ENCODE measurements at regions of chr17 and their contacts with region 1.

Region 1: GRCh38 chr17:42459256-42459800 is 650 bp downstream of the ATP6V0A1 start:
- DNase-seq: peak in 2 of 9 experiments; percentile 25 to 38
- ATAC-seq: peak; percentile 15
- H3K4me3 ChIP-seq: peak overlapping the region; percentile 53 to 54
- H3K4me3 Mint-ChIP-seq: peak overlapping the region; percentile 89
- H3K27ac ChIP-seq: peak overlapping the region in 1 of 2 experiments; percentile 39
- H3K27ac Mint-ChIP-seq: peak overlapping the region; percentile 70
- H3K4me1 ChIP-seq: peaks cover 38% of the 10 kb centered on the region
- H3K4me1 Mint-ChIP-seq: peaks cover 41% of the 10 kb centered on the region
- H3K27me3 ChIP-seq: peaks cover 0 to 2% of the 10 kb centered on the region in 2 experiments
- H3K27me3 Mint-ChIP-seq: no peaks in the 10 kb centered on the region
- CTCF ChIP-seq: no peak

Region 2: DNA sequence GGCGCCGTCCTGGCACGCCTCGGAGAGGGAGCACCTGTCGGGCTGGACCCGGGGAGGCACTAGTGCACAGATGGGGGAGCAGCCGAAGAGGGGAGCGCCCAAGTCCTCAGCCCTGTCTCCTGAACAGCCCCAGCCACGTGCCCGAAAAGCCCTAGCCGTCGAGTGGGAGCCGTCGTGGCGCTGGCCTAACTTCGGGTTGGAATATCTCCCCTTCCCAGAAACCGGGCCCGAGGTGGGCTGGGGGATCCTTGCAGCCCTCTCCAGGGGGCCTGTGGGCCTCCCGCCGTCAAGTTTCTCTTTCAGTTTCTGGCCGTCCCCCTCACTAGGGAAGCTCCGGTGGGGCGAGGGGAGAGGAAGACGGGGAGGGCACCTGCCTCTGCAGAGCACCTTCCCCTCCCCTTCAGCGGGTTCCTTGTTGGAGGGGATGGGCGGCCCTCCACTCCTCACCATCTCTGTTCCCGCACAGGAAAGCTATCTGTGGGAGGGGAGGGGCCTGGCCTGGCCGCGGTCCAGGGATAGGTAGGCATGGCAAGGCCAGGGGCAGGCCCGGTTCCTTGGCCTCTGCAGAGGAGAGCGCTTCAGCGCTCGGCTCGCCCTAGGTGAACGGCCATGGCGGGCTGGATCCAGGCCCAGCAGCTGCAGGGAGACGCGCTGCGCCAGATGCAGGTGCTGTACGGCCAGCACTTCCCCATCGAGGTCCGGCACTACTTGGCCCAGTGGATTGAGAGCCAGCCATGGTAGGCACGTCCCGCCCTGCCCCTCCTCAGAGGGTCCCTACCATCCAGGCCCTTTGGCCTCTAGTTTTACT is 170.3 kb before region 1 on chr17:
- CTCF ChIA-PET with region 1: no interaction called
- POLR2A ChIA-PET with region 1: no interaction called
- intact Hi-C with region 1: no loop called
- DNase-seq: peak; percentile 24 to 82 (median 61)
- ATAC-seq: peak; percentile 43
- H3K4me3 ChIP-seq: peak overlapping the region; percentile 74 to 84
- H3K4me3 Mint-ChIP-seq: peak overlapping the region; percentile 94
- H3K27ac ChIP-seq: peak overlapping the region; percentile 87 to 94
- H3K27ac Mint-ChIP-seq: peak overlapping the region; percentile 93
- H3K4me1 ChIP-seq: peaks cover 35% of the 10 kb centered on the region
- H3K4me1 Mint-ChIP-seq: peaks cover 54% of the 10 kb centered on the region
- H3K27me3 ChIP-seq: no peaks in the 10 kb centered on the region
- H3K27me3 Mint-ChIP-seq: no peaks in the 10 kb centered on the region
- CTCF ChIP-seq: no peak

Region 3: GRCh38 chr17:42337442-42337841 is 121.9 kb before region 1 on chr17:
- CTCF ChIA-PET with region 1: no interaction called
- POLR2A ChIA-PET with region 1: no interaction called
- intact Hi-C with region 1: loop called in 1 of 2 experiments (anchors 1 kb)
- DNase-seq: peak; percentile 31 to 87 (median 67)
- ATAC-seq: peak; percentile 85
- H3K4me3 ChIP-seq: no peak overlapping the region
- H3K4me3 Mint-ChIP-seq: peak overlapping the region; percentile 57
- H3K27ac ChIP-seq: peak overlapping the region; percentile 41 to 54
- H3K27ac Mint-ChIP-seq: peak overlapping the region; percentile 92
- H3K4me1 ChIP-seq: peaks cover 31% of the 10 kb centered on the region
- H3K4me1 Mint-ChIP-seq: peaks cover 39% of the 10 kb centered on the region
- H3K27me3 ChIP-seq: no peaks in the 10 kb centered on the region
- H3K27me3 Mint-ChIP-seq: no peaks in the 10 kb centered on the region
- CTCF ChIP-seq: no peak

Region 4: DNA sequence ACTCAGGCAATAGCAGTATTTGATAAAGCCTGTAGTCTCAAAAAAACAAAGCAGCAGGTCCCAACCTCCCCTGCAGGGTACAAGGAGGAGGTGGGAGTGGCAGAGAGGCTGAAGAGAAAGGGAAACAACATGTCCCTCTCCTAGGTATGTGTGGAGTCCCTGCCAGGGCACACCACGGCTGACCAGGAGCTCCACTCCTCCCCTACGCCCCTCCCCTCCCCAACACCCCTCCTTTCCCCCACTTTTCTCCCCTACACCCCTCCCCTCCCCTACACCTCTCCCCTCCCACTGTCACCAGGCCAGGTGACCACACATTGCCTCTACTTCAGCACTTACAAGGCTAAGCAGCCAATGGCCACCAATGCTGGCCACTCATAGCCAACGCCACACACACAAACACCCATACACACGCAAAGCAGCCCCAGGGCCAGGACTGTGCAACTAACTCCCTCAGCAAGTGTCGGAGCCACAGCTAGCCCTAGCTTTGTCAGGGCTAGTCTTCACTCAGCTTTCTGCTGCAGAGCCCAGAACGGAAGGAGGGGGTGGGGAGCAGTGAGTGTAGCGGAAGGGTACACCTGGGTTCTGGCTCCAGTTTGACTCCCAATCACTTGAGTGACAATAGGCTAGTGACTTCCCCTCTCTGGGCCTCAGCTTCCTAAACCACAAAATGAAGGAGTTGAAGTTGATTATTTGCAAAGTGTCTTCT is 44.5 kb before region 1 on chr17:
- CTCF ChIA-PET with region 1: no interaction called
- POLR2A ChIA-PET with region 1: no interaction called
- intact Hi-C with region 1: no loop called
- DNase-seq: peak in 7 of 9 experiments; percentile 29 to 67 (median 45)
- ATAC-seq: peak; percentile 79
- H3K4me3 ChIP-seq: no peak overlapping the region
- H3K4me3 Mint-ChIP-seq: peak overlapping the region; percentile 33
- H3K27ac ChIP-seq: no peak overlapping the region
- H3K27ac Mint-ChIP-seq: peak overlapping the region; percentile 11
- H3K4me1 ChIP-seq: peaks cover 16% of the 10 kb centered on the region
- H3K4me1 Mint-ChIP-seq: peaks cover 12% of the 10 kb centered on the region
- H3K27me3 ChIP-seq: no peaks in the 10 kb centered on the region
- H3K27me3 Mint-ChIP-seq: peaks cover 2% of the 10 kb centered on the region
- CTCF ChIP-seq: no peak

Region 5: DNA sequence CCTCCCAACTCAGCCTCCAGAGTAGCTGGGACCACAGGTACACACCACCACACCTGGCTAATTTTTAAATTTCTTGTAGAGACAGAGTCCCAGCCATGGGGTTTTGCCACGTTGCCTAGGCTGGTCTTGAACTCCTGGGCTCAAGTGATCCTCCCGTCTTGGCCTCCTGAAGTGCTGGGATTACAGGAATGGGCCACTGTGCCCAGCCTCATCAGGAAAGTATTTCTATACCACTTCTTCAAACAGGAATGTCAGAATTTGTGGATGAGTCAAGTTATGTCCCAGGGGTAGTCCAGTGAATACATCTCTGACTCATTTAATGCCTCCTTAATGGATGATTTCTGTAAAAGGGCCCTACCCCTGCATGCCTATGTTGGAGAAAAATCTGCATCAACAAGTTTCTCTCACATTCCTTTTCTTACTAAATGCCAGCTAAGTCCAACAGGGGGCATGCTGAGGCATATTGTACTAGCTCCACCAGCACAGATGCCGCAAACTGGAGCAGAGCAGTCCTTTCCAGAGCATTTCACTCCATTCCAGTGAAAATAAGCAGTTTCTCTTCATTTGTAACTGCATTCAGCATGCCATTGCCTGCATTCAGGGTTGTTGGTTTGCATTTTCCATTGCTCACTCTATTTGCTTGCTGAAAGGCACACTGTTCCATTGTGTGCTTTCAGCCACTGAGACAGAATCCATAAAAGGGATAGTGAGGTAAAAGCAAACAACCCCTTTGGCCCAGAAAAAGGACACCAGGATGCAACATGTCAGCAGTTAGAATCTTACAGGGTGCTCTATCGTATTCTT is 31.0 kb before region 1 on chr17:
- CTCF ChIA-PET with region 1: interaction called, 3 read pairs
- POLR2A ChIA-PET with region 1: interaction called, 3 read pairs
- intact Hi-C with region 1: loop called in 1 of 2 experiments (anchors 1 kb)
- DNase-seq: peak in 7 of 9 experiments; percentile 16 to 74 (median 58)
- ATAC-seq: peak; percentile 71
- H3K4me3 ChIP-seq: no peak overlapping the region
- H3K4me3 Mint-ChIP-seq: no peak overlapping the region
- H3K27ac ChIP-seq: no peak overlapping the region
- H3K27ac Mint-ChIP-seq: no peak overlapping the region
- H3K4me1 ChIP-seq: peaks cover 1% of the 10 kb centered on the region
- H3K4me1 Mint-ChIP-seq: peaks cover 4% of the 10 kb centered on the region
- H3K27me3 ChIP-seq: peaks cover 3 to 4% of the 10 kb centered on the region in 2 experiments
- H3K27me3 Mint-ChIP-seq: peaks cover 14% of the 10 kb centered on the region
- CTCF ChIP-seq: peak; percentile 78

Region 6: DNA sequence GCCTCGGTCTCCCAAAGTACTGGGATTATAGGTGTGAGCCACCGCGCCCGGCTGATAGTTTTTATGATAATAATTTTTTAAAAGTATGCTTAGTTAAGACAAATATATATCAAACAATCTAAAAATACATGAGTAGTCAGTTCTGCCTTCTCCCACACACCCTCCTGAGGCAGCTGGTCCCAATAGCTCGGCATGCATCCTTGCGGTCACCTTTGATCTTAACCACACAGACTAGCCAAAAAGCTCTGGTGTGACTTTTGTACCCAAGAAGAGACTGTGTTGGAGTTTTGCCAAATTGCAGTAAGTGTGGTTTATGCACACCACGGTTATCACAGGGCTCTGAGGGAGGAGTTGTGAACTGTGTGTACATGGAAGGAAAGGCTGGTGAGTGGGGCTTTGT is 25.0 kb after region 1 on chr17:
- CTCF ChIA-PET with region 1: no interaction called
- POLR2A ChIA-PET with region 1: interaction called, 3 read pairs
- intact Hi-C with region 1: loop called (anchors 1 kb)
- DNase-seq: peak; percentile 37 to 96 (median 70)
- ATAC-seq: peak; percentile 91
- H3K4me3 ChIP-seq: peak overlapping the region in 1 of 2 experiments; percentile 6
- H3K4me3 Mint-ChIP-seq: peak overlapping the region; percentile 51
- H3K27ac ChIP-seq: no peak overlapping the region
- H3K27ac Mint-ChIP-seq: peak overlapping the region; percentile 45
- H3K4me1 ChIP-seq: peaks cover 30% of the 10 kb centered on the region
- H3K4me1 Mint-ChIP-seq: peaks cover 38% of the 10 kb centered on the region
- H3K27me3 ChIP-seq: no peaks in the 10 kb centered on the region
- H3K27me3 Mint-ChIP-seq: no peaks in the 10 kb centered on the region
- CTCF ChIP-seq: no peak